Head of caudate nucleus (tissue), 42 donors: ENCODE measurements at regions of chr7 and their contacts with region 1.

Region 1: GRCh38 chr7:90404777-90405176 is 1.5 kb downstream of the CLDN12 start:
- DNase-seq: peak in 1 of 42 donors; percentile 8

Region 2: DNA sequence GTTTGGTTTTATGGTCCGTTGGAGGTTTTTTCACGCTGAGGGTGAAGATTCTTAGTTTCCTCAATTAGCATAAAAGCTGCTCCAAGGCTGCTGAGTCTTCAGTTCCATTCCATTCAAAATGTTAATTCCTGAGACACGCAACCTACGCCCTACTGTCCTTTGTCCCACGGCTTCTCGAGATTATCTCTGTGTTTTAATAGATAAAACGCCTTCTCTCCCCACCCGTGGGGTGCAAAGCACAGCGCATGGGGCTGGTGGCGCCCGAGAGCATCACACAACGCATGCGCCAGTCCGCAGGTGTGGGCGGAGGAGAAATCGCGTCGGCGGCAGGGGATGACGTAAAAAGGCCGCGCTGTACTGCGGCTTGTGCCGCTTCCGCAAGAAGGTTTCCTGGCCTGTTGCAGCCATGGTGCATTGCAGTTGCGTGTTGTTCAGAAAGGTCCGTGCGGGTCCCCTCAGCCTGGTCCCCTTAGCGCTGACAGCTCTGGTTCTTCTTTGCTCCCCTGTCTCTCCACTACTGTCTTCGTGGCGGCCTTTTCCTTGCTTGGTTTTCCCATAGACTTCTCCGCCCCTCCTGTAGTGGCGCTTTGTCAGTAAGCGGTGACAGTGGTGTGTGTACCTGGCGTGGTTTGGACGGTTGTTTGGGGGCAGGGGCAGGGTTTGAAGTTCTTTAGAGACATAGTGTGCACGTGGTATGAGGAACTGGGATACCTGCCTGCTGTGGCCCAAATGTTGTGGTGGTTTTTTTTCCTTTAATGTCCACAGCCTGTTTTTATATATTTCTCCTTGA is 58.2 kb before region 1 on chr7 and contains the start of gene GTPBP10:
- intact Hi-C with region 1: loop called (anchors 5 kb)
- DNase-seq: peak; percentile 83 to 97 (median 94)